Right lobe of liver (tissue), 6 donors: ENCODE measurements at regions of chr19 and their contacts with region 1.

Region 1: DNA sequence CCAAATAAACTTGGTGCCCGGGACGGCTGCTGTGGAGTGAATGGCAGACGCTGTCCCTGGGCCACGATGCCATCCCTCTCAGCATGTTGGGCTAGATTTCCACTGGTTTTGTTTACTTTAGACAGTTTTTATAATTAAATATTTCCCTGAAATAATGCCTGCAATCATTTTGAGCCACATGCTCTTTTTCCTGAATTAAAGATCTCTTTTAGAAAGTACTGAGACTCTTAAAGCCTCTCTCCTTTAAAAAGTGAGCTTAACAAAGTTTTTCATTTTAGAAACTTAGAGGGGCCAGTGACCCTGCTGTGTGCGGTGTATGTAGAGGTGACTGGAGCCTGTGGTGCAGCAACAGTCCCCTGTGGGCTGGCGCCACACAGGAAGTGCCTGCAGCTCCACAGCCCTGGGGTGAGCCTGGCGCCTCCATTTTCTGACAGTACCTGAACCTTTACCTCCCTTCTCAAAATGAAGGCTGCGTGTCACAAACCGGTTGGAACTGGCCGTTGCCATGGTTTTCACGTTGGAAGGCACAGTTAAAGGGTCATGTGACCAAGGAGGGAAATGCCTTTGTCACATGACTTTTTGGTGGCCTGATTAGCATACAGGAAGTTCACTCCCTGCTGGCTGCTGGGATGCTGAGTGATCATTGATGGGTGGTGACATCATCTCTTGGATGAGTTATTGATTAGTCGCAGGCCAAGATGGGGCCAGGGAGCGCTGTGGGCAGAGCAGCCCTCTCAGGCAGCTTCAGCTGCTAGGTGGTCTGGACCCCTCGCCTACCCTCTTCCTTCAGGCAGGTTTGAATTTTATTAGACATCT is 26.3 kb downstream of the TSSK6 start:
- DNase-seq: peak; percentile 85 to 90 (median 87)
- ATAC-seq: peak; percentile 61 to 72 (median 66)
- H3K4me3 ChIP-seq: peak overlapping the region in 2 of 3 donors; percentile 12 to 27
- H3K27ac ChIP-seq: peak overlapping the region; percentile 68 to 86 (median 86)
- H3K4me1 ChIP-seq: peaks cover 0 to 45% (median 22%) of the 10 kb centered on the region in 4 donors
- H3K27me3 ChIP-seq: no peaks in the 10 kb centered on the region
- CTCF ChIP-seq: no peak
- POLR2A ChIP-seq: peak; percentile 77

Region 2: GRCh38 chr19:19192078-19192882 is 296.8 kb before region 1 on chr19 and contains the starts of genes BORCS8 and RFXANK:
- intact Hi-C with region 1: loop called in 1 of 2 experiments (anchors 10 kb)
- DNase-seq: peak; percentile 99
- ATAC-seq: peak; percentile 93 to 97 (median 95)
- H3K4me3 ChIP-seq: peak within 1 kb of the TSS; percentile 74 to 99 (median 99)
- H3K27ac ChIP-seq: peak within 1 kb of the TSS; percentile 99 to 100 (median 99)
- H3K4me1 ChIP-seq: peaks cover 0 to 13% (median 8%) of the 10 kb centered on the region in 4 donors
- H3K27me3 ChIP-seq: no peaks in the 10 kb centered on the region
- CTCF ChIP-seq: no peak
- POLR2A ChIP-seq: peak; percentile 61
- total RNA-seq, gene BORCS8: 6.0 to 12.2 (median 9.8) TPM
- total RNA-seq, gene RFXANK: 13.8 to 21.2 (median 17.3) TPM

Region 3: GRCh38 chr19:19366612-19367396 is 122.3 kb before region 1 on chr19:
- intact Hi-C with region 1: loop called (anchors 5 kb)
- DNase-seq: peak; percentile 77 to 82 (median 82)
- ATAC-seq: peak; percentile 85 to 94 (median 92)
- H3K4me3 ChIP-seq: peak overlapping the region in 1 of 3 donors; percentile 4
- H3K27ac ChIP-seq: no peak overlapping the region
- H3K4me1 ChIP-seq: peaks cover 0 to 8% (median 0%) of the 10 kb centered on the region in 4 donors
- H3K27me3 ChIP-seq: no peaks in the 10 kb centered on the region
- CTCF ChIP-seq: peak; percentile 94 to 98 (median 98)
- POLR2A ChIP-seq: no peak

Region 4: DNA sequence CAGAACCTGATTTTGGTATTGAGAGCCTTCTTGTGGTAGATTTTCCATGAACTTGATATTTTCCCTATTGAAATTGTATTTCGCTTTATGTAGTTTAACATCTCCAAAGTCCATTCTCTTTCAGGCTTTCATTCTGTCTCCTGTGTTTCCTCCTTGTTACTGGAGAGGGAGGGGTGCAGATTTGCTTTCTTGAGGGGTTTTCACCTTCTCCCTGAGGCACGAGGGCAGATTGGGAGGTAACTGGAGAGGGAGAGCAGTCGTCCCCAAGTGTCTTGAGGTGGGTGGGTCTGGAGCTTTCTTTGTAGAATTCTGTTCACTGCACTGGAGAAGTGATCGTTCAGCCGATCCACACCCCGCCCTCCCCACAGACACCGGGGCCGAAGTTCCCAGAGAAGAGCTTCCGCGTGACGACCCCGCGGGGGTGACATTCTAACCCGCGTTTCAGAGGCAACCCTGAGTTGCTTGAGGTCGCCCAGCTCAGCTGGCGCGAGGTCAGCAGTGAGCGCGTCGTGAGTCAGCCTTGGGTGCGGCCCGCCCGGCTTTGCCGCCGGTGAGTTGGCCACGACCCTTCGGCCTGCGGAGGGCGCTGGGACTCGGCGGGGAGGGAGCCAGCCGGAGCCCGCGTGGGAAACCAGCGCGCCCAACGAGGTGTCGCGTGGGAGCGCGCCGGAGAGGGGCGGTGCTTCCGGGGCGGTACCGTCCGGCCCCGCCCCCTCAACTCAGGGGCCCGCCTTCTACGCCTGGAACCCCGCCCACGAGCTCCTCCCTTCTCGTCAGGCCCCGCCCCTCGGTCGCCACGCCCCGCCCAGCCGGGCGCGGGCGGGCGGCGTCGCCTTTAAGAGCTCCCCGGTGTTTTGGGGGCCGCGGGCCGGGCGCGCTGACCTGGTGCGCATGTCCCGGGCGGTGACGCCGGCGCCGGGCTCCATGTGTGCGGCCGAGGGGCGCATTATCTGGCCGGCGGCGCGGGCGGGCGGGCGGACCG is 83.9 kb before region 1 on chr19 and contains the start of gene GATAD2A:
- intact Hi-C with region 1: loop called in 1 of 2 experiments (anchors 5 kb)
- DNase-seq: peak; percentile 96 to 98 (median 97)
- ATAC-seq: peak; percentile 91 to 97 (median 95)
- H3K4me3 ChIP-seq: peak within 1 kb of the TSS; percentile 79 to 88 (median 80)
- H3K27ac ChIP-seq: peak within 1 kb of the TSS; percentile 45 to 76 (median 76)
- H3K4me1 ChIP-seq: peaks cover 0 to 36% (median 13%) of the 10 kb centered on the region in 4 donors
- H3K27me3 ChIP-seq: no peaks in the 10 kb centered on the region
- CTCF ChIP-seq: peak in 3 of 4 donors; percentile 32 to 51 (median 42)
- POLR2A ChIP-seq: peak; percentile 71
- total RNA-seq, gene GATAD2A: 23.9 to 59.6 (median 39.2) TPM

Region 5: DNA sequence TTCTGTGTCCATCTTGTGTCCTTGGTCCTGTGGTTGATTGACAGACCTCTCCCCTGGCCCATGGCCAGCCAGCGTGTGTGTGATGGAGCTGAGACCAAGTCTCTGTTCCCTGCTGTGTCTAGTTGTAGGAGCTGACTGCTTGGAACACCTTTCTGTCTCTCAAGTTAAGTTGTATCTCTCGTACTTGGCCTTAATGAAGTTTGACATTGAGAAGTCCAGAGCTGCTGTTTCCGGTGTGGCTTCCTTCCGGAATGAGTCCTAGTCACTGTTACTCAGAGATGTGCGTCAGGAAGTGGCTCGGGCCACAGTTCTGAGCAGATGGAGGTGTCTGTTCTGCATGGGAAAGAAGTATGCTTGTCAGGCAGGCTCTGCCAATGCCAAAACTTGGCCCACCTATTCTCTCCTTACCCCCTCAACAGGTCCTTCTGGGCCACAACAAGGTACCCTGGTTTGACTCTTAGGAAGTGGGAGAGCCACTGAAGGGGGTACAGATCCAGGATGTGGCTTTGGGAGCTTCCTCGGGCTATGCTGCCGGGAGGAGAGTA is 29.3 kb before region 1 on chr19:
- intact Hi-C with region 1: no loop called
- DNase-seq: peak in 1 of 3 donors; percentile 49
- ATAC-seq: peak; percentile 45 to 50 (median 46)
- H3K4me3 ChIP-seq: peak overlapping the region in 1 of 3 donors; percentile 4
- H3K27ac ChIP-seq: peak overlapping the region; percentile 12 to 63 (median 61)
- H3K4me1 ChIP-seq: peaks cover 0 to 59% (median 13%) of the 10 kb centered on the region in 4 donors
- H3K27me3 ChIP-seq: no peaks in the 10 kb centered on the region
- CTCF ChIP-seq: no peak
- POLR2A ChIP-seq: no peak